ENCODE measurements at regions of chr1 and their contacts with region 1.

Region 1: DNA sequence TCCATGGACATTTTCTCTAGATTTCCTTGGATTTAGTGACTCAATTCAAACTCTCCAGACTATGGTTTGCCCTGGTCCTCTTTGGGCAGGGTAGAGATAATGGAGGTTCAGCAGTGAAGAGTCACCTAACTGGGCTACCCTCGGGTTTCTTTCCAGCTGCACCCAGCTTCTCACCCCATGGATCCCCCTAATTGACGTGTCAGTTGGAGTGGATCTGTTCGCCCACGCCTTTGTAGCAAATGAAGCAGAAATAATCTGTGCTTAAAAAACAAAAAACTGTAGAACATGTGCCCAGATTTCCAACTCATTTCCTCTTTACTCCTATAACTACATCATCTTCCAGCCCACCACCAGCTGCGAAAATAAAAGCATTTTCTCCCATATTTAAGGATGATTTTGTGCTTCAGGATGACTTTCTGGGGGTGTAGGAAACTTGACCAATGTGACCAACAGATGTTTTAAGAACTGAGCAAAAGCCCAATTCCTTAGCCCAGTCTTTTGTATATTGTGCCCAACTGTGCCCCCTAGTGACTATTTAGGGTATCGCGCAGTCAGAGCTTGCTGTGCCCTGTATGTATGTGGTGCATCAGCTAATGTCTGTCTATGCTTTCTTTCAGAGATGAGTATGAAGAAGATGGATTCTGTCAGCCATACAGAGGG is 66.5 kb upstream of the UBE2U start:
- DNase-seq: peak; percentile 91
- ATAC-seq: peak; percentile 89

Region 2: GRCh38 chr1:63615768-63616420 is 521.0 kb before region 1 on chr1:
- intact Hi-C with region 1: loop called (anchors 10 kb)
- DNase-seq: peak; percentile 69
- ATAC-seq: peak; percentile 82

Region 3: DNA sequence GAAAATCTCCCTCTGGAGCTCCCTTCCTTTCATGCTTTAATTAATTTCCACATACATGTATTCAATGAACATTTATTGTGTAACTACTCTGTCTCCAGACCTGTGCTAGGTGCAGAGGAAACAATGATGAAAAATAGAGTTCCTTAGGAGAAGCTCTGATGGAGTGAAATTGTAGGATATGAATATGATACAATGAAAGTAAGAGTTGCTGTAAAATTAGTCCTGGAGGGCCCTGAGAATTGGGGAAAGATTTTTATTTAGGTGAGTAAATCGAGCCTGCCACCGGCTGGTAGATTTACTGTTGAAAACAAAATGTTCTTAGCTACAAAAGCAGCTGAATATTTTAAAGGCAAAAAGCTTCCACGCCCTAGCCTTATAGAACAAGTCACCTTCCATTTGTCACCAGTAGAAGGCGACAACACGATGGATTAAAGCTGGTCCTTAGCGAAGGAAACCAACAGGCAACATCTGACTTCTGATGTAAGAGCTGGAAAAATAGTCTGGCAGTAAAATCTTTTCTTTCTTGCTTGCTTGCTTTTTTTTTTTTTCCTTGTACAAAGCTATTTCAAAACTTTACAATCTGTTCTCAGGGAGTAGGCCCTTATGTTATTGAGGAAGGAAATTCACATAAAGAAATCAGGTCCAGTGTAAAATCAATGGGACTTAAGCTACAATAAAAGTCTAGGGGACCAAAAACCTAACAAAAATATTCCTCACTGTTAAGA is 445.0 kb before region 1 on chr1:
- intact Hi-C with region 1: loop called (anchors 5 kb)
- DNase-seq: no peak
- ATAC-seq: peak; percentile 97

Region 4: GRCh38 chr1:63773815-63774616 is 362.9 kb before region 1 on chr1 and contains the start of gene ROR1:
- intact Hi-C with region 1: loop called (anchors 10 kb)
- DNase-seq: peak; percentile 92
- ATAC-seq: peak; percentile 97
- total RNA-seq, gene ROR1: 16.7 TPM

Region 5: GRCh38 chr1:64598100-64598571 is 461.3 kb after region 1 on chr1:
- intact Hi-C with region 1: no loop called
- DNase-seq: no peak
- ATAC-seq: no peak